Activated naive CD4-positive, alpha-beta T cell treated with anti-CD3 and anti-CD28 coated beads, Interleukin-2, amount 10 ng/mL, durations not matched to agents 7 days and 5 days (primary cell): ENCODE measurements at regions of chr6 and their contacts with region 1.

Region 1: DNA sequence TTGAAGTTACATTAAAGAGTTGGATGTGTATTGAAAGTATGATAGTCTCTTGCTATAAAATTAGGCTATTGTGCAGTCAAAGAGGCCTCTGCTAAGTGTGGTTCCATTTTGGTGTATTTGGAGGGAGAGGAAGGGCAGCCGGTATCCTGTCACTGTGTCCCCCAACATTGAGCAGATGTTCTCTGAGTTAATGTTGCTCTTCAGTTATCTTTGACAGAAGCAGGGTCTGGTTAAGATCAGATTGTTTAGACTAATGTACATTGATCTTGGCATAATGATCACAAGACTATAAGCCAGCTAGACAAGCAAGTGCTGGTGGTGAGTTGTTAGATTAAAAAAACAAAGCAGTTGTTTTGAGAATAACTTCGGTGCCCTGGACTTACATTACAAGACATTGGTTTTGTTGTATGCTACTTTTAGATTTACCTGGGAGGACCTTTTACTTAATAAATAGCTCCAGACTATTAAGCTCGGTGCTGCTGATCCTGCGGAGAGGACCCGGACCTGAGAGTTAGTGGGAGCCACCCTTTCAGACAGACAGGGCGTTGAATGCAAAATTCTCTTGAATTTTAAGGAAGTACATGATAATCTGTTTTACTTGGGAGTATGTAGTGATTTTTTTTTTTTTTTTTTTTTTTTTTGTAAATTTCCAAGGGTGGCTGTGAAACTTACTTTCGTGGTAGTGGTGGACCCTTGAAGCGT is 97.8 kb downstream of the JARID2 start:
- DNase-seq: no peak
- H3K4me3 Mint-ChIP-seq: no peak overlapping the region
- H3K27ac Mint-ChIP-seq: peak overlapping the region; percentile 20
- H3K4me1 Mint-ChIP-seq: peaks cover 78% of the 10 kb centered on the region
- H3K27me3 Mint-ChIP-seq: no peaks in the 10 kb centered on the region

Region 2: DNA sequence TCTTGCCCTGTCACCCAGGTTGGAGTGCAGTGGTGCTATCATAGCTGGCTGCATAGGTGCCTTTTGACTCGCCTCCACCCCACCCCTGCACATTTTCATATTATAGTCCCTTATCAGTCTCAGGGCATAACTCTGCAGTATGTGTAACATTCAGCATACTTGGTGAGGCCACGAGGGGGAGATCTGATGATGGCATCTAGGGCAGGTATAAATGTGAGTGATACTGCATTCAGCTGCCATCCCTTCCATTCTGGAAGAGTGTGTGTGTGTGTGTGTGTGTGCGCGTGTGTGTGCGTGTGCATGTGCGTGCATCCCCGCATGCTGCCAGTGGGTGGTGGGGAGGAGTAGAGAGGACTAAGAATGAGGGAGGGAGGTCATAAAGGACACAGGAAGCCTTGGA is 16.4 kb before region 1 on chr6:
- CTCF ChIA-PET with region 1: interaction called, 11 read pairs
- DNase-seq: peak; percentile 68
- H3K4me3 Mint-ChIP-seq: no peak overlapping the region
- H3K27ac Mint-ChIP-seq: peak overlapping the region; percentile 16
- H3K4me1 Mint-ChIP-seq: peaks cover 74% of the 10 kb centered on the region
- H3K27me3 Mint-ChIP-seq: no peaks in the 10 kb centered on the region